Activated CD4-positive, alpha-beta T cell treated with anti-CD3 and anti-CD28 coated beads, Interleukin-2, amount 10 ng/mL, durations not matched to agents 24 days and 14 days (primary cell): ENCODE measurements at regions of chr6 and their contacts with region 1.

Region 1: GRCh38 chr6:96521644-96522464 is at the start of gene UFL1:
- DNase-seq: peak; percentile 98
- H3K4me3 Mint-ChIP-seq: peak within 1 kb of the TSS; percentile 98
- H3K27ac Mint-ChIP-seq: peak within 1 kb of the TSS; percentile 99
- H3K4me1 Mint-ChIP-seq: peaks cover 16% of the 10 kb centered on the region
- H3K27me3 Mint-ChIP-seq: no peaks in the 10 kb centered on the region
- total RNA-seq, gene UFL1: 25.1 and 26.9 TPM in 2 replicates

Region 2: DNA sequence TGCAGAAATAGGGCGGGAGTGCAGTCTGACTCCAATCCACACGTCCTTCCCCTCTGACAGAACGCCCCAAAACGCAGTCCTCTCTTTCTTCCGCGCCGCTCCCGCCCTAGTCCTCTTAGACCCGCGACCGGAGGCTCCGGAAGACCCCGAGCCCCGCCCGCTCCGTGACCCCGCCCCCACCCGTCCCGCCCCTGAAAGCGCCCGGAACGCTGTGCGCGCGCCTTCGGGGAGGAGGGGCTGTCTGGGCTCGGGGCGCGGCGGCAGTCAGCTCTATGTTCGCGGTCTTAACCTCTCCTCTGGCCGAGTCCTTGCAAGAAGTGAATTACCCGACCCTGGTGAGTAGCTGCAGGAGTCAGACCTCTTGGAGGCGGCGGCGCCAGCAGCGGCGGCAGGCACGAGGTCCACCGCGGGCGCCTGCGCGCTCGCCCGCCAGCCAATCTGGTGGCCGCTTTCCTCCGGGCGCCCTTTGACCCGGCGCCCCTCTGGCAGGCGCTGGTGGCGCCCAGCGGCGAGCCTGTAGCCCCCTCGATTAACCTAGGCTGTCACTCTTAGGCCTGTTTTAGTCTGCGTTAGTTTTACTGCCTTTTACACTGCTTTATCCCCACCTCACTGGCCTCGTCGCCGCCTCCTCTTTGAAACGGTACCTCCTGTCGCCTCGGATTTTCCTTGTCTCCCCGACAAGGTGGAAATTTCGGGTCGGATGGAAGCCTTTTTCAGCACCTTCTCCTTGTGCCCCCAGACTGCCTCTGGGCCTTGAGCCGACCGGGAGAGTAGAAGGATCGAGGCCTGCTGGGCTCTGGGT is 944.3 kb before region 1 on chr6 and contains the start of gene MANEA:
- intact Hi-C with region 1: loop called (anchors 1 kb)
- DNase-seq: peak; percentile 94
- H3K4me3 Mint-ChIP-seq: peak within 1 kb of the TSS; percentile 98
- H3K27ac Mint-ChIP-seq: peak within 1 kb of the TSS; percentile 98
- H3K4me1 Mint-ChIP-seq: peaks cover 42% of the 10 kb centered on the region
- H3K27me3 Mint-ChIP-seq: no peaks in the 10 kb centered on the region
- total RNA-seq, gene MANEA: 22.6 and 23.1 TPM in 2 replicates

Region 3: GRCh38 chr6:96468681-96469224 is 53.1 kb before region 1 on chr6:
- intact Hi-C with region 1: loop called (anchors 2 kb)
- DNase-seq: no peak
- H3K4me3 Mint-ChIP-seq: no peak overlapping the region
- H3K27ac Mint-ChIP-seq: no peak overlapping the region
- H3K4me1 Mint-ChIP-seq: peaks cover 14% of the 10 kb centered on the region
- H3K27me3 Mint-ChIP-seq: peaks cover 11% of the 10 kb centered on the region

Region 4: DNA sequence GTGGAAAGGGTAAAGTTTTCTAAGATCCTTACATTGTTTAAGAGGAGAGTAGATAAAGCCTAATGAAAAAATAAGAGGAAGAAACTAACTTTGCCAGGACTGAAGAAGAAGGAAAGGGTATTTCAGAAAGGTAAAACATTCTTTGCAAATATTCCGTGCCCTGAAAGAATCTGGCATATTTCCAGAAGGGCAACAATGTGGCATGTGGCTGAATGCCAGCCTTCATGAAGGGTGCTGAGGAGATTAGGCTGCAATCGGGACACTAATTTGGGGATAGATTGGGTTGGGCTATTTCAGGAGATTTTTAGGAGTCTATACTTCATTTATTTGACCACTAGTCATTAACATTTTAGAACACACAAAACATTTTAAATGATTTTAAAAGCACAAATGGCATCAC is 16.5 kb before region 1 on chr6:
- intact Hi-C with region 1: no loop called
- DNase-seq: no peak
- H3K4me3 Mint-ChIP-seq: no peak overlapping the region
- H3K27ac Mint-ChIP-seq: no peak overlapping the region
- H3K4me1 Mint-ChIP-seq: peaks cover 2% of the 10 kb centered on the region
- H3K27me3 Mint-ChIP-seq: no peaks in the 10 kb centered on the region

Region 5: GRCh38 chr6:96542702-96543101 is 20.8 kb after region 1 on chr6:
- intact Hi-C with region 1: loop called (anchors 2 kb)
- DNase-seq: no peak
- H3K4me3 Mint-ChIP-seq: no peak overlapping the region
- H3K27ac Mint-ChIP-seq: no peak overlapping the region
- H3K4me1 Mint-ChIP-seq: no peaks in the 10 kb centered on the region
- H3K27me3 Mint-ChIP-seq: no peaks in the 10 kb centered on the region

Region 6: GRCh38 chr6:96563853-96564252 is 42.0 kb after region 1 on chr6:
- intact Hi-C with region 1: no loop called
- DNase-seq: no peak
- H3K4me3 Mint-ChIP-seq: no peak overlapping the region
- H3K27ac Mint-ChIP-seq: no peak overlapping the region
- H3K4me1 Mint-ChIP-seq: no peaks in the 10 kb centered on the region
- H3K27me3 Mint-ChIP-seq: peaks cover 20% of the 10 kb centered on the region

Region 7: GRCh38 chr6:96837081-96837971 is 315.5 kb after region 1 on chr6 and contains the start of gene GPR63:
- intact Hi-C with region 1: loop called (anchors 1 kb)
- DNase-seq: peak; percentile 96
- H3K4me3 Mint-ChIP-seq: peak within 1 kb of the TSS; percentile 92
- H3K27ac Mint-ChIP-seq: peak within 1 kb of the TSS; percentile 75
- H3K4me1 Mint-ChIP-seq: peaks cover 25% of the 10 kb centered on the region
- H3K27me3 Mint-ChIP-seq: peaks cover 49% of the 10 kb centered on the region
- total RNA-seq, gene GPR63: 2.2 and 2.7 TPM in 2 replicates

Region 8: GRCh38 chr6:96923871-96924493 is 402.1 kb after region 1 on chr6:
- intact Hi-C with region 1: loop called (anchors 5 kb)
- DNase-seq: no peak
- H3K4me3 Mint-ChIP-seq: peak overlapping the region; percentile 91
- H3K27ac Mint-ChIP-seq: peak overlapping the region; percentile 91
- H3K4me1 Mint-ChIP-seq: peaks cover 31% of the 10 kb centered on the region
- H3K27me3 Mint-ChIP-seq: peaks cover 3% of the 10 kb centered on the region